Heart right ventricle (tissue), 16 donors: ENCODE measurements at regions of chr3 and their contacts with region 1.

Region 1: GRCh38 chr3:121545574-121546455 is at the start of gene POLQ:
- DNase-seq: peak; percentile 82 to 93
- ATAC-seq: peak; percentile 97 to 100 (median 99)
- H3K4me3 ChIP-seq: peak within 1 kb of the TSS; percentile 36 to 75 (median 64)
- H3K27ac ChIP-seq: peak within 1 kb of the TSS in 9 of 10 donors; percentile 17 to 86 (median 74)
- H3K4me1 ChIP-seq: peaks cover 0 to 18% (median 7%) of the 10 kb centered on the region in 9 donors
- H3K27me3 ChIP-seq: no peaks in the 10 kb centered on the region
- CTCF ChIP-seq: no peak
- total RNA-seq, gene POLQ: 0.25 to 0.93 (median 0.46) TPM

Region 2: GRCh38 chr3:121508389-121508788 is 37.4 kb before region 1 on chr3:
- intact Hi-C with region 1: no loop called
- DNase-seq: no peak
- ATAC-seq: no peak
- H3K4me3 ChIP-seq: no peak overlapping the region
- H3K27ac ChIP-seq: no peak overlapping the region
- H3K4me1 ChIP-seq: no peaks in the 10 kb centered on the region
- H3K27me3 ChIP-seq: no peaks in the 10 kb centered on the region
- CTCF ChIP-seq: no peak

Region 3: DNA sequence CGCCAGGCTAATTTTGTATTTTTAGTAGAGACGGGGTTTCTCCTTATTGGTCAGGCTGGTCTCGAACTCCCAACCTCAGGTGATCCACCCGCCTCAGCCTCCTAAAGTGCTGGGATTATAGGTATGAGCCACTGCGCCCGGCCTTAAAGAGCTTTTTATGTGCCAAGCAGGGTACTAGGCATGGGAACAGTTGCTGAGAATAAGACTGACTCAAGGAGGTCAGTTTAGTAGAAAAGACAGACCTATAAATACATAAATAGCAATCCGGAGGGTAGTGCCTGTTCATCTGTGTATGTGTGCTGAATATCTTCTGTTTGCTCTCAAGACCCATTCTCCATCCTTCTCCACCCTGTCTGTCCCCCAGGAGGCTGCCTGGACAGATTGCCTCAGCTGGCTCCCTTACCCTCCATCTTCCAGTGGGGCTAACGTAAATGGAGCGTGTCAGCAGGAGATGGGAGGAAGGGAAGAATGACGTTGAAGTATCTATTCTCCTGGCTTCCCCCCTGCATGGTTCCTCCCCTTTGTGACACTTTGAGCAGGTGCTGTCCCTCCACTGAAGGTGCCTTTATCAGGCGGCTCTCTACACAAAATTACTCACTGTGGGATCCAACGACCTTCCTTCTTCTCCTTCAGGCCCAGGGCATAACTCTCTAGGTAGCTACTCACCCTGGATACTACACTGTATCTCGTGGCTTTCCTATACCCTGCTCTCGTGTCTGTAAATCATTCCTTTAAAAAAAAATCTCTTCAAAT is 78.5 kb after region 1 on chr3:
- intact Hi-C with region 1: no loop called
- DNase-seq: no peak
- ATAC-seq: peak in 5 of 8 donors; percentile 20 to 78 (median 43)
- H3K4me3 ChIP-seq: no peak overlapping the region
- H3K27ac ChIP-seq: peak overlapping the region in 5 of 10 donors; percentile 10 to 50 (median 43)
- H3K4me1 ChIP-seq: peaks cover 0 to 39% (median 14%) of the 10 kb centered on the region in 9 donors
- H3K27me3 ChIP-seq: no peaks in the 10 kb centered on the region
- CTCF ChIP-seq: no peak

Region 4: GRCh38 chr3:121648219-121648958 is 102.6 kb after region 1 on chr3:
- intact Hi-C with region 1: loop called in 6 of 10 experiments (anchors 1 to 10 kb)
- DNase-seq: peak in 1 of 2 donors; percentile 74
- ATAC-seq: peak; percentile 89 to 99 (median 96)
- H3K4me3 ChIP-seq: no peak overlapping the region
- H3K27ac ChIP-seq: peak overlapping the region; percentile 49 to 83 (median 72)
- H3K4me1 ChIP-seq: peaks cover 0 to 25% (median 13%) of the 10 kb centered on the region in 9 donors
- H3K27me3 ChIP-seq: no peaks in the 10 kb centered on the region
- CTCF ChIP-seq: peak in 4 of 9 donors; percentile 22 to 51 (median 41)

Region 5: DNA sequence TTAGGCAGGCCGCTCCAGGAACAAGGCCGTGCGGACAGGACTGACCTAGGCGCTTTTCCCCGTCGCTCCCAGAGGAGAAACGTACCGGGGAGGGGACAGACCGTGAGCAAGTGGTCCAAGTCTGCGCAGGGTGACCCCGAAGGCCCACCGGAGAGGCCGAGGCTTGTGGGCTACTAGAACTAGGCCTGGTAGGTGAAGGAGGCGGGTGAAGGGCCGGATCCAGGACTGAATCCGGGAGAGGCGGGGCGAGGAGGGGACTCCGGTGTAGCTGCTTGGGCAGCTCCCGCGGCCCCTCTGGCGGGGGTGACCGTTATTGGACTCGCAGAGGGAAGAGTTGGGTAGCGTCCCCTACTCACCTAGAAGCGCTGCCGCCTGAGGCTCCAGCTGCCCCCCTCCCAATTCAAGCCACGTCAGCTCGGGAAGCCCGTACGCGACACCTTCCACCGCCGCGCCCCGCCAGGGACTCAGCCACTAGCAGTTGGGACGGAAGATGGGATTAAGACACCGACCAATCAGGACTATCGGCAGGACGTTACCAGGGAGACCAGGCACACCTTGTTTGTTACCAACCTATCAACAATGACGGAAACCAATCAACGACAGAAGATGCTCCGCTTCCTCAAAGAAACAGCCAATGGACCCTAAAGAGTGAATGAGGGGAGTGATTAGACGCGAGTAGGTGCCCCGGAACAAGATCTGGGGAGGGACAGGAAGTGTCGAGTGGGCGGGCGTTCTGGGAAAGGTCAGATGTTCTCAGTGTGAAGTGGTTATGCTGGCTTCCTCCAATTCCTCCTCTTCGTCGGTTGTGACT is 203.7 kb after region 1 on chr3 and contains the start of gene GOLGB1:
- intact Hi-C with region 1: loop called in 3 of 10 experiments (anchors 5 to 10 kb)
- DNase-seq: peak; percentile 88 to 97
- ATAC-seq: peak; percentile 97 to 99 (median 99)
- H3K4me3 ChIP-seq: peak within 1 kb of the TSS; percentile 68 to 94 (median 83)
- H3K27ac ChIP-seq: peak within 1 kb of the TSS; percentile 76 to 96 (median 92)
- H3K4me1 ChIP-seq: peaks cover 12 to 48% (median 34%) of the 10 kb centered on the region in 9 donors
- H3K27me3 ChIP-seq: no peaks in the 10 kb centered on the region
- CTCF ChIP-seq: peak in 2 of 9 donors; percentile 9 to 20
- total RNA-seq, gene GOLGB1: 37.1 to 66.8 (median 49.7) TPM

Region 6: GRCh38 chr3:122258757-122259371 is 713.0 kb after region 1 on chr3:
- intact Hi-C with region 1: loop called in 8 of 10 experiments (anchors 2 to 10 kb)
- DNase-seq: peak; percentile 56 to 63
- ATAC-seq: peak; percentile 81 to 98 (median 86)
- H3K4me3 ChIP-seq: no peak overlapping the region
- H3K27ac ChIP-seq: no peak overlapping the region
- H3K4me1 ChIP-seq: peaks cover 0 to 32% (median 0%) of the 10 kb centered on the region in 9 donors
- H3K27me3 ChIP-seq: peaks cover 0 to 13% (median 0%) of the 10 kb centered on the region in 7 donors
- CTCF ChIP-seq: peak; percentile 23 to 72 (median 60)

Region 7: GRCh38 chr3:122356415-122356814 is 810.6 kb after region 1 on chr3:
- intact Hi-C with region 1: loop called in 1 of 10 experiments (anchors 10 kb)
- DNase-seq: peak in 1 of 2 donors; percentile 13
- ATAC-seq: peak in 3 of 8 donors; percentile 25 to 46 (median 42)
- H3K4me3 ChIP-seq: no peak overlapping the region
- H3K27ac ChIP-seq: no peak overlapping the region
- H3K4me1 ChIP-seq: no peaks in the 10 kb centered on the region
- H3K27me3 ChIP-seq: no peaks in the 10 kb centered on the region
- CTCF ChIP-seq: peak in 6 of 9 donors; percentile 30 to 42 (median 38)

Region 8: DNA sequence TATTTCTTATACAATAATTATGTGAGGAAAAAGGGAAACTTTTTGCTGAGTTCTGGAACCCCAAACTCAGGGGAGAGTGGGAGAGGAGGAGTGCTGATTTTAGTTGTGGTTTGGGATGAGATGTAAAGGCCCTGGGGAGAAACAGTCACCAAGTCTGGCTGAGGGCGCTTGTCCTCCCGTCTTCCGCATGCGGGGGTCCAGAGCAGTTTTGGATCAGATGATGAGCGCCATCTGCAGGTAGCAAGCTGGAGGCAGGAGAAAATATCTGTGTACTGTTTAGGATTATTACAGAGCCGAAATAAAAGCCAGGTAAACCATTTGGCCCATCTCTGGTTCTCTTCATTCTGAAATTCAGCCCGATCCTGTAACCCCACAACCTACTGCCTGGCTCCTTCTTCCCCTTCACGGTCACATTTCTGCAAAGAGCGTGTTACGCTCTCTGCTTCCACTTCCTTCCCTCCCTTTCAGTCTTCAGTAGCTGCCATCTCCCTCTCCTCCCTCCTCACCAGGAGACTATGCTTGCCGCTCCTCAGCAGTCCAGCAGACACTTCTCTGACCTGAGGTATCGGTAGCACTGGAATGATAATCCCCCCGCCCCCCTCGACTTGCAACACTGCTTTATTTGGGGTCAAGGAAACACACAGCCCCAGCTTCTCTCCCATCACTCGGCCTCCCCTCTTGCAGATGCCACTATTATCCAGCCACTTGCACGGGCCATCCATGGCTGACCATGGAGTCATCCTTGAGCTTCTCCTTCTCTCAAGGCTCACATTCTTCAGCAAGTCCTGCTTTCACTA is 1133.5 kb after region 1 on chr3:
- intact Hi-C with region 1: loop called in 1 of 10 experiments (anchors 5 kb)
- DNase-seq: peak; percentile 72 to 88
- ATAC-seq: peak; percentile 65 to 87 (median 78)
- H3K4me3 ChIP-seq: peak overlapping the region in 9 of 10 donors; percentile 56 to 90 (median 83)
- H3K27ac ChIP-seq: peak overlapping the region; percentile 77 to 98 (median 94)
- H3K4me1 ChIP-seq: peaks cover 0 to 52% (median 34%) of the 10 kb centered on the region in 9 donors
- H3K27me3 ChIP-seq: no peaks in the 10 kb centered on the region
- CTCF ChIP-seq: peak; percentile 60 to 88 (median 80)

Region 9: DNA sequence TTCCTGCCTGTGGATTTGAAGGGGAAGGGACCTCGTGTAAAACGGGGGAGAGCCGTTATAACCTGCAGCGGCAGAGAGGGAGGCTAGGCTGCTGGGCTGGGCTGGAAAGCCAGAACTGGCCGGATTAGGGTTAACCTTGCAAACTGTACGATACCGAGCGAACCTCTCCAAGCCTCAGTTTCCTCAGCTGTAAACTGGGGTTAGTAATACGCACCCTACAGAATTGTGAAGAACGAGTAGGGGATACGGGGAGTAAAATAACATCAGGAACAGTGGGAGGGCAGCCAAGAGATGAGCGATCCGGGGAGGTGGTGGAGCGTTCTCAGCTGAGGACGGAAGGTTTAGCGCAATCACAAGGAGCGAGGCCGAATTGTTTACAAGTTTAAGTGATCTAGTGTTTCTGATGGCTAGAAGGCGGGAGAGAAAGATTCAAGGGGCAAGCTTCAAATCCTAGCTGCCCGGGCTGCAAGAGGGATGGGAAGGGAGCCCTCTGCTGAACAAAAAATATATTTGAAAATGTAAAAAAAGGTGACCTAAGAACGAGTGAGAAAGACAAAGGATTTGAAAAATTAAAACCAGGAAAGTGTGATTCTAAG is 1482.5 kb after region 1 on chr3:
- intact Hi-C with region 1: loop called in 1 of 10 experiments (anchors 10 kb)
- DNase-seq: peak in 1 of 2 donors; percentile 46
- ATAC-seq: peak; percentile 7 to 62 (median 50)
- H3K4me3 ChIP-seq: peak overlapping the region; percentile 40 to 82 (median 68)
- H3K27ac ChIP-seq: peak overlapping the region in 7 of 10 donors; percentile 8 to 75 (median 53)
- H3K4me1 ChIP-seq: peaks cover 9 to 47% (median 30%) of the 10 kb centered on the region in 9 donors
- H3K27me3 ChIP-seq: peaks cover 0 to 82% (median 17%) of the 10 kb centered on the region in 7 donors
- CTCF ChIP-seq: peak; percentile 29 to 71 (median 55)